ENCODE measurements at regions of chr2 and their contacts with region 1.

Region 1: DNA sequence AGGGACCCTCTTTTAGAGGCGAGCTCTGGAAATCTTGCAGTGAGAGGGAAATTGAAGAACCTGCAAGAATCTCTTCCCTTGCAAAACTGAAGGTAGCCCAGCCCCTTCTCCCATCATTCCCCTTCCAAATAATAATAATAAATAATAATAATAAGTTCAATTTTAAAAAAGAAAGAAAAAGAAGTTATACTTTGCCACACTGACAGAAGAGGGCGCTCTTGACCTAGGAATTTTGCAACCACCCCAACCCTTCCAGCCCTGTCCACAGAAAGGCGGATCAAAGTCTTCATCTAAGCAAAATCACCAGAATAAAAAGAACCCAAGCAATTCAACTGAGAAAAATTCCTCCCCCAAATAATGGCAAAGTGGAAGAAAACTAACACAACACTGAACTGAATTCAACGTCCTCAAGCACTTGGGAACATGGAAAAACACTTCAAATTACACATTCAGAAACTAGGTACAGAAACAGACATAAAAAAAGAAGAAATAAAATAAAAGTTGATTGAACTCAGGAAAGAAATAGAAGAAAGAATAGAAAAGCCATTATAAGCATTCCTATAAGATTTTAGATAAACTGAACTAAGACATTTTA is 98.9 kb upstream of the GLS start:
- DNase-seq: peak in 3 of 5 donors; percentile 42 to 46 (median 42)
- ATAC-seq: peak in 3 of 4 donors; percentile 52 to 69 (median 69)
- H3K4me3 ChIP-seq: no peak overlapping the region
- H3K27ac ChIP-seq: no peak overlapping the region
- H3K4me1 ChIP-seq: peaks cover 0 to 3% (median 0%) of the 10 kb centered on the region in 12 donors
- H3K27me3 ChIP-seq: no peaks in the 10 kb centered on the region
- CTCF ChIP-seq: peak; percentile 41 to 78 (median 66)
- POLR2A ChIP-seq: no peak

Region 2: DNA sequence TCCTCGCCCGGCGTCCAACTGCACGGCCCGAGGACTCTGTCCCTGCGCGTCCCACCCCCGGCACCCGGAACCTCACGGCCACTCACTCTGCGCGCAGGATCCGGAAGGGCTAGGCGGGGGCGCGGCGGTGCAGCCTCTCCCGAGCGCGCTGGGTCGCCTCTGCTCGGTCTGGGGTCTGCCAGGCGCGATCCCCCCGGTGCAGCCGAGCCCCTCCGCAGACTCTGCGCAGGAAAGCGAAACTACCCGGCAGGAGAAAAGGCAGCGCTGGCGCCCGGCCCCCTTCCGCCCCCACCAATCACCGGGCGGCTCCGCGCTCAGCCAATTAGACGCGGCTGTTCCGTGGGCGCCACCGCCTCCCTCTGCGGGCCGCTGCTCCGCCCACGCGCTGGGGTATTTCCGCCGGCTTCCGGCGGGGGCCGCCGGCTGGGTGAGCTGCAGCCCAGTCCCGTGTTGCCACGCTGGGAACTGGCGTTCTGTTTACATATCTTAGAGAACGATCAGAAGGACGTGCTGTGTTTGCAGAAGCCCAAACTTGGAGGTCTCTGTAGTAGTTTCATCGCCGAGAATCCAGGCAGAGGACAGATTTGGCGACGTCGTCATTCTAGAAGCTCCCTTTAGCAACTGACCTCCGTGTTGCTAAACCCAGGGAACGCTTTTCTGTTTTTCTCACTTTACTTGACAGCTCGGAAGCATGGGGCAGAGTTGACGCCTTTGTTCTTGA is 232.4 kb after region 1 on chr2 and contains the start of gene STAT1:
- intact Hi-C with region 1: loop called in 1 of 10 experiments (anchors 5 kb)
- DNase-seq: peak; percentile 94 to 97 (median 95)
- ATAC-seq: peak; percentile 89 to 98 (median 96)
- H3K4me3 ChIP-seq: peak within 1 kb of the TSS; percentile 72 to 94 (median 82)
- H3K27ac ChIP-seq: peak within 1 kb of the TSS; percentile 75 to 98 (median 90)
- H3K4me1 ChIP-seq: peaks cover 0 to 69% (median 30%) of the 10 kb centered on the region in 12 donors
- H3K27me3 ChIP-seq: no peaks in the 10 kb centered on the region
- CTCF ChIP-seq: peak in 6 of 12 donors; percentile 6 to 37 (median 20)
- POLR2A ChIP-seq: peak in 1 of 2 donors; percentile 95
- total RNA-seq, gene STAT1: 29.1 to 469 (median 55.1) TPM

Region 3: DNA sequence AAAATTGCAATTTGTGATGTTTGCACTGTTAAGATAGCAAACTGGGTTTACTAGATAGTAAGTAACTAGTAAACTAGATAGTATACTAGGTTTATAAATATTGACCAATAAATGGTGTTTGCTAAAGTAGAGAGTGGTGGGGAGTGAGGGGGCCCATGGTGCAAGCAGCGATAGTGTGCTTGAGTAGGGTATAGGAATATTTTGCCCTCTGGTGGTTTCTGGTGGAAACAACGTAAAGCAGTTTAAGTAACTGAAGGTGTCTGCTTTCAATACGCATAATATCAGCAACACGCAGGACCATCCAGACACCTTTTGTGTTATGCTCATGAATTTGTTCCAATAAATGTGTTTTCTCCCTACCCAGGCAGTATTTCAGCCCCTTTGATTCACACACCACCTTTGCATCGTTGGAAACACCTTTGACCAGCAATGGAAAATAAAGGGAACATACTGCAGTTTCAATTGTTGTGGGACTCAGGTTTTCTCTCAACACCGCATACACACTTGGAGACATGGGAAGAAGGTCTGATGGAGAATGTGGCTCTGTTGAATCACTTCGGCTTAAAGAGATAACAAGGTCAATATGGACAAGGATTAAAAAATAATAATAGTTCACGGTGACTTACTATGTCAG is 248.9 kb after region 1 on chr2:
- intact Hi-C with region 1: loop called (anchors 1 to 5 kb)
- DNase-seq: no peak
- ATAC-seq: peak in 3 of 4 donors; percentile 54 to 71 (median 66)
- H3K4me3 ChIP-seq: no peak overlapping the region
- H3K27ac ChIP-seq: no peak overlapping the region
- H3K4me1 ChIP-seq: peaks cover 0 to 60% (median 1%) of the 10 kb centered on the region in 12 donors
- H3K27me3 ChIP-seq: no peaks in the 10 kb centered on the region
- CTCF ChIP-seq: peak; percentile 48 to 70 (median 62)
- POLR2A ChIP-seq: no peak

Measured in heart left ventricle (tissue), 16 donors.